ENCODE measurements at regions of chr6 and their contacts with region 1.

Region 1: DNA sequence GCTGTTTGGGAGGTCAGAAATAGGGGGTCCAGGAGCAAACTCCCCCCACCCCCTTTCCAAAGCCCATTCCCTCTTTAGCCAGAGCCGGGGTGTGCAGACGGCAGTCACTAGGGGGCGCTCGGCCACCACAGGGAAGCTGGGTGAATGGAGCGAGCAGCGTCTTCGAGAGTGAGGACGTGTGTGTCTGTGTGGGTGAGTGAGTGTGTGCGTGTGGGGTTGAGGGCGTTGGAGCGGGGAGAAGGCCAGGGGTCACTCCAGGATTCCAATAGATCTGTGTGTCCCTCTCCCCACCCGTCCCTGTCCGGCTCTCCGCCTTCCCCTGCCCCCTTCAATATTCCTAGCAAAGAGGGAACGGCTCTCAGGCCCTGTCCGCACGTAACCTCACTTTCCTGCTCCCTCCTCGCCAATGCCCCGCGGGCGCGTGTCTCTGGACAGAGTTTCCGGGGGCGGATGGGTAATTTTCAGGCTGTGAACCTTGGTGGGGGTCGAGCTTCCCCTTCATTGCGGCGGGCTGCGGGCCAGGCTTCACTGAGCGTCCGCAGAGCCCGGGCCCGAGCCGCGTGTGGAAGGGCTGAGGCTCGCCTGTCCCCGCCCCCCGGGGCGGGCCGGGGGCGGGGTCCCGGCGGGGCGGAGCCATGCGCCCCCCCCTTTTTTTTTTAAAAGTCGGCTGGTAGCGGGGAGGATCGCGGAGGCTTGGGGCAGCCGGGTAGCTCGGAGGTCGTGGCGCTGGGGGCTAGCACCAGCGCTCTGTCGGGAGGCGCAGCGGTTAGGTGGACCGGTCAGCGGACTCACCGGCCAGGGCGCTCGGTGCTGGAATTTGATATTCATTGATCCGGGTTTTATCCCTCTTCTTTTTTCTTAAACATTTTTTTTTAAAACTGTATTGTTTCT is at the start of gene VEGFA:
- DNase-seq: peak; percentile 58
- H3K4me3 ChIP-seq: peak within 1 kb of the TSS; percentile 74 to 97 (median 82)
- H3K27ac ChIP-seq: peak within 1 kb of the TSS; percentile 93 to 98 (median 97)
- H3K4me1 ChIP-seq: peaks cover 33 to 52% (median 35%) of the 10 kb centered on the region in 3 donors
- H3K27me3 ChIP-seq: peaks cover 0 to 9% (median 0%) of the 10 kb centered on the region in 4 donors
- CTCF ChIP-seq: peak; percentile 92 to 99 (median 97)
- POLR2A ChIP-seq: peak in 3 of 4 donors; percentile 40 to 81 (median 77)
- total RNA-seq, gene VEGFA: 28.0 to 107 (median 80.8) TPM

Region 2: GRCh38 chr6:43667245-43668150 is 102.3 kb before region 1 on chr6:
- intact Hi-C with region 1: loop called (anchors 5 kb)
- DNase-seq: no peak
- H3K4me3 ChIP-seq: peak overlapping the region in 1 of 4 donors; percentile 42
- H3K27ac ChIP-seq: peak overlapping the region; percentile 10 to 84 (median 73)
- H3K4me1 ChIP-seq: peaks cover 29 to 56% (median 39%) of the 10 kb centered on the region in 3 donors
- H3K27me3 ChIP-seq: no peaks in the 10 kb centered on the region
- CTCF ChIP-seq: peak; percentile 92 to 97 (median 95)
- POLR2A ChIP-seq: no peak

Region 3: GRCh38 chr6:44074439-44075136 is 304.8 kb after region 1 on chr6:
- intact Hi-C with region 1: loop called (anchors 5 kb)
- DNase-seq: no peak
- H3K4me3 ChIP-seq: peak overlapping the region in 3 of 4 donors; percentile 52 to 71 (median 54)
- H3K27ac ChIP-seq: peak overlapping the region; percentile 56 to 83 (median 80)
- H3K4me1 ChIP-seq: peaks cover 37 to 78% (median 44%) of the 10 kb centered on the region in 3 donors
- H3K27me3 ChIP-seq: peaks cover 0 to 13% (median 0%) of the 10 kb centered on the region in 4 donors
- CTCF ChIP-seq: peak; percentile 85 to 97 (median 91)
- POLR2A ChIP-seq: no peak